ENCODE measurements at regions of chr20 and their contacts with region 1.

Region 1: GRCh38 chr20:2101865-2102584 is 398 bp downstream of the STK35 start:
- DNase-seq: peak; percentile 96

Region 2: GRCh38 chr20:1776681-1777475 is 325.1 kb before region 1 on chr20:
- intact Hi-C with region 1: loop called (anchors 10 kb)
- DNase-seq: peak; percentile 93

Region 3: GRCh38 chr20:2051946-2052345 is 50.1 kb before region 1 on chr20:
- intact Hi-C with region 1: no loop called
- DNase-seq: no peak

Region 4: DNA sequence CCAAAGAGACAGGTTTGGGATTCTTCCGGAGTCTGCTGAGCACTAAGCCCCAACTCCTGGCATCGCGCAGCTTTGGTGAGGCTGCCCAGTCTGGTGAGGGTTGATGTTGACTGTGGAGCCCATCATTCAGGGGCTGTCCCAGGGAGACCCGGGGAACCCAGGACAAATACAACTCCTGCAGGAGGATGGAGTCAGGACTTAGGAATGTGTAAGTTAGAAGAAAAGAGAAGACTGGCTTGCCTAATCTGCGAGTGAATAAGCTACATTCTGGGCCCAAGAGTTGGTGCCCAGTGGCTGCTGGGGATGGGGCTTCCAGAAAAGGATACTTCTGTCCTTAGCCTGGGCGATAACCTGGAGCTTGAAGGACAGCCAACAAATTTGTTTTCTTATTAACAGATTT is 47.5 kb after region 1 on chr20:
- intact Hi-C with region 1: loop called (anchors 5 kb)
- DNase-seq: no peak

Measured in cardiac septum (tissue), 1 donor.